ENCODE measurements at regions of chr20 and their contacts with region 1.

Region 1: DNA sequence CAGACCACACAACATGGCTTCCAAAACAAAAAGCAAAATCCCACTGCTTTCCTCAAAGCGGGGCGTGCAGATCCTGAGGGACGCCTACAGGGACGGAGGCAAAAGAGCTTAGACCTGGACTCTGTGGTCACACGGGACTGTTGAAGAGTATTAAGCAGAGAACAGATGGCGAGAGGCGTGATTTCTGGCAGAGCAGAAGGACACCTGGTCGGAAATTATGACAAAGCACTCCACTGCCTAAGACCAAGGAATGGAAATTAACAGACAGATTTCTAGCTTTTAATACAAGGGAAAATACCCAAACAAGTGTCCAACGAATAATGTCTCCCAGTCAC is 15.4 kb downstream of the CST7 start:
- DNase-seq: no peak
- ATAC-seq: peak in 2 of 4 donors; percentile 23 to 32
- H3K4me3 ChIP-seq: no peak overlapping the region
- H3K27ac ChIP-seq: no peak overlapping the region
- H3K4me1 ChIP-seq: no peaks in the 10 kb centered on the region
- H3K27me3 ChIP-seq: no peaks in the 10 kb centered on the region
- CTCF ChIP-seq: no peak

Region 2: GRCh38 chr20:23477223-23477622 is 1487.2 kb before region 1 on chr20:
- intact Hi-C with region 1: loop called in 1 of 2 experiments (anchors 5 kb)
- DNase-seq: no peak
- ATAC-seq: no peak
- H3K4me3 ChIP-seq: no peak overlapping the region
- H3K27ac ChIP-seq: no peak overlapping the region
- H3K4me1 ChIP-seq: no peaks in the 10 kb centered on the region
- H3K27me3 ChIP-seq: no peaks in the 10 kb centered on the region
- CTCF ChIP-seq: no peak

Region 3: GRCh38 chr20:24909086-24909780 is 55.2 kb before region 1 on chr20:
- intact Hi-C with region 1: no loop called
- DNase-seq: no peak
- ATAC-seq: no peak
- H3K4me3 ChIP-seq: no peak overlapping the region
- H3K27ac ChIP-seq: no peak overlapping the region
- H3K4me1 ChIP-seq: no peaks in the 10 kb centered on the region
- H3K27me3 ChIP-seq: peaks cover 0 to 2% (median 0%) of the 10 kb centered on the region in 3 donors
- CTCF ChIP-seq: no peak

Region 4: DNA sequence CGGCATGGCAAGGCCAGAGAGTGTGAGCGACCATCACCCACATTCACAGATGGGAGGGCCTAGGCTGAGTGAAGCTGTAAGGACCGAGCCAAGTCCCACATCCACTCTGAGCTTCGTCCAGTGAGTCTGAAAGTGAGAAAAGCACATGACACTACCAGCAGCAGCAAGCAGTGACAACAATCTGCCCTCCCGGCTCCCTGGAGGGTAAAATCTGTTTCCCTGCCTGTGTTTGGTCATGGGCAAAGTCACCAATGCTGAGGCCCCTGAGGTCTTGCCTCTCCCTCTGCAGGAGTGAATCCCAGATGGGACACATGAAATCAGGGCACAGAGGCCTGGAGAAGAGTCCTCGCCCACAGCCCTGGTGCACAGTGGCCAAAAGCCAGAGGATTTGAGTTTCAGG is 21.8 kb before region 1 on chr20:
- intact Hi-C with region 1: loop called in 1 of 2 experiments (anchors 2 kb)
- DNase-seq: no peak
- ATAC-seq: no peak
- H3K4me3 ChIP-seq: no peak overlapping the region
- H3K27ac ChIP-seq: no peak overlapping the region
- H3K4me1 ChIP-seq: no peaks in the 10 kb centered on the region
- H3K27me3 ChIP-seq: no peaks in the 10 kb centered on the region
- CTCF ChIP-seq: no peak